Endothelial cell of umbilical vein (primary cell): ENCODE measurements at regions of chr4 and their contacts with region 1.

Region 1: GRCh38 chr4:95317085-95317793 is 231.5 kb downstream of the UNC5C start:
- DNase-seq: peak; percentile 15
- H3K4me3 ChIP-seq: no peak overlapping the region
- H3K27ac ChIP-seq: no peak overlapping the region
- H3K4me1 ChIP-seq: no peaks in the 10 kb centered on the region
- H3K27me3 ChIP-seq: no peaks in the 10 kb centered on the region
- CTCF ChIP-seq: no peak
- POLR2A ChIP-seq: no peak

Region 2: DNA sequence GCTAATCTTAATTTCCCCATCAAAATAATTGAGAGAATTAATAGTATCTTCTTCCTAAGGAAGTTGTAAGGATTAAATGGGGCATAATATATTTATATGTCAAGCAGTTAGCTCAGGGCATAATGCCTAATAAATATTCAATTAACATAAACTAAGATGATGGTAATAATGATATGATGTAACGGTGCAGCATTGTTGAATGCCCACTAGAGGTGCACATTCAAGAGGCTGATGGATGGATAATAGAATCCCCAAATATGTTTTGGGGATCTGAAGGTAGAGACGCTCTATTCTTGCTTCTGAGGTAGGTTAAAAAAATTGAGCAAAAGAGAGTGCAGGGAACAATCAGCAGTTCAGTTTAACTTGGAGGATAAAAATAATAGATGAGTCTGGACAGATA is 1451.6 kb before region 1 on chr4:
- CTCF ChIA-PET with region 1: no interaction called
- POLR2A ChIA-PET with region 1: no interaction called
- dilution Hi-C with region 1: no loop called
- intact Hi-C with region 1: loop called (anchors 5 kb)
- DNase-seq: no peak
- H3K4me3 ChIP-seq: no peak overlapping the region
- H3K27ac ChIP-seq: no peak overlapping the region
- H3K4me1 ChIP-seq: no peaks in the 10 kb centered on the region
- H3K27me3 ChIP-seq: no peaks in the 10 kb centered on the region
- CTCF ChIP-seq: no peak
- POLR2A ChIP-seq: no peak

Region 3: GRCh38 chr4:94833394-94833793 is 483.8 kb before region 1 on chr4:
- CTCF ChIA-PET with region 1: no interaction called
- POLR2A ChIA-PET with region 1: no interaction called
- dilution Hi-C with region 1: no loop called
- intact Hi-C with region 1: no loop called
- DNase-seq: no peak
- H3K4me3 ChIP-seq: no peak overlapping the region
- H3K27ac ChIP-seq: no peak overlapping the region
- H3K4me1 ChIP-seq: no peaks in the 10 kb centered on the region
- H3K27me3 ChIP-seq: no peaks in the 10 kb centered on the region
- CTCF ChIP-seq: no peak
- POLR2A ChIP-seq: no peak

Region 4: DNA sequence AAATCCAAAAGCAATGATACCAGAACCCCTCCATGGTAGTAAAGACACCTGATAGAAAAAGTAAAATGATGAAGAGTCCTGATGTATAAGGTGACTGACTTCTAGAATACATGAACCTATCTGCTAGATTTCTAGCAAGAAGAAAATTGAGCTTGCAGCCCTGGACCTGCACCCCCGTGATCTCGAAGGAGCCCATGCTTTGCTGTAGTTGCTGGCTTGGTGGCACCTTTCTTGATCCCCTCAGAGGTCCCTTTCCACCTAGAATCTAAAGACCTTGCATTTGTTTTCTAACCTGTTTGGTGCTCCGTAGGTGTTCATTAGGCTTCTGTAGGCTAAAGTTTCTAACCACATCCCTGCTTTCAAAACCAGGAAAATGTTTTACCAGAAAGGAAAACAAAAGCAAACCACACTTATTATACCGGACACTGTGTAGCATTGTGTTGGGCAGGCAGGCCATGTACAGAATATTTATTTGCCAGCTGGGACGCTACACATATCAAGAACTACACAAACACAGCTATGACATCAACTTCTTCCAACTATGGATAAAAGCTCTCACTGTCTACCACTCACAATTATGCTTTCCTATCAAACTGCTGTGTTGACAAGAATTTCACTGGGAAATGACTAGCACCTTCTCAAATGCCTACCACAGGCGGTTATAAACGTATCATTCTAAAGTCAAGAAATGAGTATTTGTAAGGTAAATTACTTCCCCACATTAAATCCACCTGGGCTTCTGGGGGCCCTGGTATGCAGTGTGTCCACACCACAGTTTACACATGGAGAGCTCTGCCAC is 84.7 kb before region 1 on chr4:
- CTCF ChIA-PET with region 1: no interaction called
- POLR2A ChIA-PET with region 1: no interaction called
- dilution Hi-C with region 1: no loop called
- intact Hi-C with region 1: no loop called
- DNase-seq: no peak
- H3K4me3 ChIP-seq: no peak overlapping the region
- H3K27ac ChIP-seq: no peak overlapping the region
- H3K4me1 ChIP-seq: no peaks in the 10 kb centered on the region
- H3K27me3 ChIP-seq: no peaks in the 10 kb centered on the region
- CTCF ChIP-seq: no peak
- POLR2A ChIP-seq: no peak

Region 5: DNA sequence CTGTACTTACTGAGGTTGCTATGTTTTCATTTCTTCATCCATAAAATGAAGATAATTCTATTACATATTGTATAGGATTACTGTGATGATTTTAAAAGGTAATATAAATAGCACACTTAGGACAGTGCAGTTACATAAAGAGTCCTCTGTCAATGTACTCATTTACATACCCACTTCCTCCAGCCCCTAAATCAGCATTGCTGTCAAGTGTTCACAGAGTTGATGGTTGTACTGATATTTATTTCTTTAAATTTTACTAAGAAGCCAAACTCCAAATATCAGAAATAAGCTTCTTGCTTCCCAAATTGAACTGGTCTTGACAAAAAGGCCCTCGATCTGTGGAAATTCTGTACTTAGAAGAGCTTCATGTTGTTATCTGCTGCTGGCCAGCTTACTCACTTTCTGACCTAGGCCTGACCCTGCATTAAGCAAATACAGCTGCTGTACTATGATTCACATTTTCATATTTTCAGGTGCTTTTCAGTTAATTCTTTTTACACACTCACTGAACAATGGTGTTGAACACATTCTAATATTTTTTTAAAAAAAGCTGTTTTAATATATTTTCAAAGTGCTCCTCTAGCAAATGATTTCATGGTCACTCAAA is 28.1 kb before region 1 on chr4:
- CTCF ChIA-PET with region 1: no interaction called
- POLR2A ChIA-PET with region 1: no interaction called
- dilution Hi-C with region 1: no loop called
- intact Hi-C with region 1: no loop called
- DNase-seq: peak; percentile 92
- H3K4me3 ChIP-seq: no peak overlapping the region
- H3K27ac ChIP-seq: peak overlapping the region; percentile 77
- H3K4me1 ChIP-seq: peaks cover 31% of the 10 kb centered on the region
- H3K27me3 ChIP-seq: no peaks in the 10 kb centered on the region
- CTCF ChIP-seq: no peak
- POLR2A ChIP-seq: no peak